GM12878 (cell line): ENCODE measurements at regions of chr11 and their contacts with region 1.

Region 1: DNA sequence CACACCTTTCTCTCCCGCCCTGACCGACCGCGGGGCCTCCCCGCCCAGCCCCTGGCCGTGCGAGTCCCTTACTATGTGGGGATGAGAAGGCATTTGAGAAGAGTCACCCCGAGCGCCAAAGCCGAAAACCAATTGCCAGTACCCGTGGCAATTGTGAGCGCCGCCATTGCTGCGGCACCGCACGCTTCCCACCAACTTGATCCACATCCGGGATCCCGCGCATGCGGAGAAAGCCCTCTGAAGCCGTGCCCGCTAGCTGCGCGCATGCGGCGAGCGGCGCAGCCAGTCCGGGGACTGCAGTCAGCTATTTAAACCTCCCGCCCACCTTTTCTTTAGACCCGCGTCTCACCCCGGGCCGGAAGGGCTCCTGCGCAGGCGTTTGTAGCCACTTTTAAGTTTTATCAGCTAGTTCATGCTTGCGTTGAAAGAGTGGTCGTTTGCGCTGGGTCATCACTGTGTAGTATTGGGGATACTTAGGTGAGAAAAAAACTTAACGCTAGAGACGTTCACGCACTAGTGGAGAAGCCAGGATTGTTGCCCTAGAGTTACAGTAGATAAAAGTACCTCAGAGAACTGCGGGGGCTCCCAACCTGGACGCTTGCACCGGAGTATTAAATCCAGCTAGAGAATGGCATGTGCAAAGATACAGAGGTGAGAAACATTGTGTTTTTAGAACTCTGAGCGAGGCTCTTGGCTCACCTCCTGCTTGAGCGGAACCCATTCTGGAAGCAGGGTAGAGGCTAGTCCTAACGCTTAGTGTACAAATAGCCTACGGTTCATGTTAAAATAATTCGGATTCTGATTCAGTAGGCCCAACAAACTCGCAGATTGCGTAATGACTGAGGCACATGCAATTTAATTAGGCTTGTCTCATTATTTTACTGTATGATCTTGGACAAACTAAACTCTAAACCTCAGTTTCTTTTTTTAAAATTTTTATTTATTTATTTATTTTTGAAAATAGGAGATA is at the start of gene ALG8:
- DNase-seq: peak; percentile 90
- ATAC-seq: peak; percentile 96
- H3K4me3 ChIP-seq: peak within 1 kb of the TSS; percentile 88
- H3K27ac ChIP-seq: peak within 1 kb of the TSS; percentile 82
- H3K4me1 ChIP-seq: peaks cover 11% of the 10 kb centered on the region
- H3K27me3 ChIP-seq: no peaks in the 10 kb centered on the region
- CTCF ChIP-seq: no peak
- EP300 ChIP-seq: 0 out of 4 replicates have a peak, but pooled peaks of 1 of the 2 experiments have one; percentile 11
- POLR2A ChIP-seq: peak; percentile 95
- RAD21 ChIP-seq: no peak
- polyA plus RNA-seq, gene ALG8: 79.1 to 105 TPM

Region 2: DNA sequence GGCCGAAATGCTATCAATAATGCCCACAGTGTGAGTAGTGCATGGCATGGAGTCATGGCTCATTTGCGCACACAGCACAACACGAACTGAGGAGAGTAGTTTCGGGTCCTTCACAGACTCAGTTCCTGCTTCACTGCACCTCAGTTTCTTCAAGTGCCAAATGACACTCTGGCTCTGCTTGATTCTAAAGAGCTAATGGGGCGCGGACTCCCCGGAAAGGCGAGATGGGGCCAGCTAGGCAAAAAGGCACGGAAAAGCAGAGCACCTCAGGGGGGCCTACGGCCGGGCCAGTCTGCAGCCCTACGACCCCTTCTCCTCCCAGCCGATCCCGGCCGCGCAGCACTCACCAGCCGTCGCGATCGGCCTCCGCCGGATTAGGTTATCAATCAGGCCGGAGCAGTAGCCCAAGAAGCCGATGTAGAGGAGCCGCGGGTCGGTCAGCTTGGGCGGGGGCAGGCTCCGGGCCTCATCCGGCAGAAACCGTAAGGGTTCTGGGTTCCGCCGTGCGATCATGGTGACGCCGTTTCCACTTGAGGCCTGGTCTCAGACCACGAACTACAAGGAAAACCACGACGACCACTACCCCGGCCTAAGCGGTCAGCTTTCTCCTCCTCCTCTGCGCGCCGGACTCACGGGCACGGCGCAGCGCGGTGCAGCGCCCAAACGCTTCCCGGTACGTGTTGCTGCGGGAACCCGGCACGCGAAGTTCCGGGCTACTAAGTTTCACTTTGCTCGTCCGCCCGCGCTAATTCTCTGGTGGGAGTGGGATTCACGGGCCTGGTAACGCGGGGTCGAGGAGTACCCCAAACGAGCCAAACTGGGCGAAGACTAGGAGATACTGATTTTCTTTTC is 60.2 kb before region 1 on chr11 and contains the start of gene NDUFC2:
- CTCF ChIA-PET with region 1: interaction called, 4 read pairs
- POLR2A ChIA-PET with region 1: interaction called, 8 read pairs
- RAD21 ChIA-PET with region 1: interaction called, 5 read pairs
- SMC1A ChIA-PET with region 1: interaction called, 21 read pairs
- in situ Hi-C with region 1: no loop called
- intact Hi-C with region 1: loop called (anchors 2 kb)
- DNase-seq: peak; percentile 39
- ATAC-seq: peak; percentile 87
- H3K4me3 ChIP-seq: peak within 1 kb of the TSS; percentile 74
- H3K27ac ChIP-seq: peak within 1 kb of the TSS; percentile 75
- H3K4me1 ChIP-seq: peaks cover 4% of the 10 kb centered on the region
- H3K27me3 ChIP-seq: no peaks in the 10 kb centered on the region
- CTCF ChIP-seq: no peak
- EP300 ChIP-seq: no peak; a peak in 1 of 4 replicates
- POLR2A ChIP-seq: peak; percentile 89
- RAD21 ChIP-seq: no peak
- polyA plus RNA-seq, gene NDUFC2: 483 to 529 TPM